ENCODE measurements at regions of chr5 and their contacts with region 1.

Region 1: GRCh38 chr5:83076742-83077661 is at the starts of genes TMEM167A and XRCC4:
- DNase-seq: peak; percentile 99
- ATAC-seq: peak; percentile 99
- H3K4me3 ChIP-seq: peak within 1 kb of the TSS; percentile 83 to 94 (median 90)
- H3K27ac ChIP-seq: peak within 1 kb of the TSS; percentile 94
- H3K4me1 ChIP-seq: peaks cover 49% of the 10 kb centered on the region
- H3K27me3 ChIP-seq: no peaks in the 10 kb centered on the region; a peak in 1 of 5 replicates
- CTCF ChIP-seq: no peak
- EP300 ChIP-seq: no peak
- POLR2A ChIP-seq: peak; percentile 92 to 98
- RAD21 ChIP-seq: peak; percentile 41; the same call in 1 of the 2 replicates
- total RNA-seq, gene TMEM167A: 78.7 and 122 TPM in 2 replicates
- total RNA-seq, gene XRCC4: 12.6 and 21.8 TPM in 2 replicates

Region 2: DNA sequence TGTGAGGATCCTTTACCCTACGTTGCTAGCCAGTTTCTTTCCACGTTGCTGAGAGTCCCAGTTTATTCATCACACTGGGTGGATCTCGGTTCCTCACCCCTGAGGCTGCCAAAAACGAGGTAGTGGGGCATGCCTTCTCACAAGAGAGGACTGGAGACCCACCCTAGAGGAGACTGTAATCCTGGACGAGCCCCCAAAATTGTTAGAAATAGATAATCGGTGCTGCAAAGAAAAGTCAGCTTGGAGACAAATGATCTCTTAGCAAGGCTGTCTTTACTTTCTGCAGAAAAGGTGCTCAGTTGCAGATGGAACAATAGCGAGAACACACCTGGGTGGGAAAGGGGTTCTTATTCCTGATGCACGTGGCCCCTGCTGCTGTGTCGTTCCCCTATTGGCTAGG is 101.6 kb before region 1 on chr5:
- CTCF ChIA-PET with region 1: no interaction called
- POLR2A ChIA-PET with region 1: no interaction called
- in situ Hi-C with region 1: no loop called
- intact Hi-C with region 1: loop called (anchors 1 kb)
- DNase-seq: no peak
- ATAC-seq: no peak
- H3K4me3 ChIP-seq: no peak overlapping the region
- H3K27ac ChIP-seq: no peak overlapping the region
- H3K4me1 ChIP-seq: peaks cover 57% of the 10 kb centered on the region
- H3K27me3 ChIP-seq: no peaks in the 10 kb centered on the region
- CTCF ChIP-seq: no peak
- EP300 ChIP-seq: no peak
- POLR2A ChIP-seq: no peak
- RAD21 ChIP-seq: no peak

Region 3: DNA sequence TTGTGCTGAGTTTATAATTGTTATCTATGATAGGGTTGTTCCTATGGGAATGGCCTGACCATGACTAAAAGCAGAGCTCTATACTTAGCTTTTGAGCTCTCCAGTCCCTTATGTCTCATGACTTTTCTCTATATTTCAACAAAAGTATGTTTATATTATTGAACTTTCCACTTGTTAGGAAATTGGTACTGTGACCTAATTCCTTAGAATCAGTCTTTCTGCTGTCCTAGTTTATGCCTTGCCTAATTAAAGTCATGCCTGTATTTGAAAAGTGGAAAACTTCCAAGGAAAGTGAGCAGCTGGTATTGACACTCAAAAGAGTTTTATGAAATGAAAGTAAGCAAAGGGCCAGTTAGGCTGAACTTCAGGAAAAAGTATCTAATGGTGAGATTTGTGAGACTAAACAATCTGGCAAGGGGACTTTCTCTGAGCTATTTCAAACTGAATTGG is 68.9 kb after region 1 on chr5:
- CTCF ChIA-PET with region 1: no interaction called
- POLR2A ChIA-PET with region 1: no interaction called
- in situ Hi-C with region 1: no loop called
- intact Hi-C with region 1: no loop called
- DNase-seq: no peak
- ATAC-seq: no peak
- H3K4me3 ChIP-seq: no peak overlapping the region
- H3K27ac ChIP-seq: no peak overlapping the region
- H3K4me1 ChIP-seq: no peaks in the 10 kb centered on the region
- H3K27me3 ChIP-seq: no peaks in the 10 kb centered on the region
- CTCF ChIP-seq: no peak
- EP300 ChIP-seq: no peak
- POLR2A ChIP-seq: no peak
- RAD21 ChIP-seq: no peak

Region 4: GRCh38 chr5:83253720-83254119 is 176.7 kb after region 1 on chr5:
- CTCF ChIA-PET with region 1: no interaction called
- POLR2A ChIA-PET with region 1: no interaction called
- in situ Hi-C with region 1: no loop called
- intact Hi-C with region 1: loop called (anchors 5 kb)
- DNase-seq: no peak
- ATAC-seq: no peak
- H3K4me3 ChIP-seq: no peak overlapping the region
- H3K27ac ChIP-seq: no peak overlapping the region
- H3K4me1 ChIP-seq: no peaks in the 10 kb centered on the region
- H3K27me3 ChIP-seq: no peaks in the 10 kb centered on the region
- CTCF ChIP-seq: no peak
- EP300 ChIP-seq: no peak
- POLR2A ChIP-seq: no peak
- RAD21 ChIP-seq: no peak